ENCODE measurements at regions of chr17 and their contacts with region 1.

Region 1: GRCh38 chr17:45148183-45149036 is at the start of gene HEXIM1:
- DNase-seq: peak; percentile 99
- ATAC-seq: peak; percentile 82
- H3K4me3 Mint-ChIP-seq: peak within 1 kb of the TSS; percentile 98
- H3K27ac Mint-ChIP-seq: peak within 1 kb of the TSS; percentile 100
- H3K4me1 Mint-ChIP-seq: peaks cover 40% of the 10 kb centered on the region
- H3K27me3 Mint-ChIP-seq: no peaks in the 10 kb centered on the region
- CTCF ChIP-seq: no peak
- total RNA-seq, gene HEXIM1: 22.6 to 23.5 TPM

Region 2: GRCh38 chr17:44820631-44821212 is 327.7 kb before region 1 on chr17:
- CTCF ChIA-PET with region 1: no interaction called
- POLR2A ChIA-PET with region 1: no interaction called
- intact Hi-C with region 1: no loop called
- DNase-seq: no peak
- ATAC-seq: no peak
- H3K4me3 Mint-ChIP-seq: no peak overlapping the region
- H3K27ac Mint-ChIP-seq: no peak overlapping the region
- H3K4me1 Mint-ChIP-seq: no peaks in the 10 kb centered on the region
- H3K27me3 Mint-ChIP-seq: peaks cover 6% of the 10 kb centered on the region
- CTCF ChIP-seq: no peak

Region 3: GRCh38 chr17:45060797-45061605 is 87.4 kb before region 1 on chr17 and contains the start of gene NMT1:
- CTCF ChIA-PET with region 1: interaction called, 4 read pairs
- POLR2A ChIA-PET with region 1: interaction called, 11 read pairs
- intact Hi-C with region 1: no loop called
- DNase-seq: peak; percentile 99
- ATAC-seq: peak; percentile 92
- H3K4me3 Mint-ChIP-seq: peak within 1 kb of the TSS; percentile 89
- H3K27ac Mint-ChIP-seq: peak within 1 kb of the TSS; percentile 94
- H3K4me1 Mint-ChIP-seq: peaks cover 37% of the 10 kb centered on the region
- H3K27me3 Mint-ChIP-seq: no peaks in the 10 kb centered on the region
- CTCF ChIP-seq: no peak
- total RNA-seq, gene NMT1: 156 to 169 TPM

Region 4: GRCh38 chr17:45172454-45173286 is 24.3 kb after region 1 on chr17:
- CTCF ChIA-PET with region 1: interaction called, 61 read pairs
- POLR2A ChIA-PET with region 1: interaction called, 44 read pairs
- intact Hi-C with region 1: loop called (anchors 1 kb)
- DNase-seq: peak; percentile 77
- ATAC-seq: peak; percentile 78
- H3K4me3 Mint-ChIP-seq: peak overlapping the region; percentile 68
- H3K27ac Mint-ChIP-seq: peak overlapping the region; percentile 89
- H3K4me1 Mint-ChIP-seq: peaks cover 25% of the 10 kb centered on the region
- H3K27me3 Mint-ChIP-seq: no peaks in the 10 kb centered on the region
- CTCF ChIP-seq: no peak

Region 5: GRCh38 chr17:45228763-45229539 is 80.5 kb after region 1 on chr17:
- CTCF ChIA-PET with region 1: interaction called, 10 read pairs
- POLR2A ChIA-PET with region 1: interaction called, 39 read pairs
- intact Hi-C with region 1: no loop called
- DNase-seq: peak; percentile 96
- ATAC-seq: peak; percentile 41
- H3K4me3 Mint-ChIP-seq: peak overlapping the region; percentile 99
- H3K27ac Mint-ChIP-seq: peak overlapping the region; percentile 99
- H3K4me1 Mint-ChIP-seq: peaks cover 70% of the 10 kb centered on the region
- H3K27me3 Mint-ChIP-seq: no peaks in the 10 kb centered on the region
- CTCF ChIP-seq: no peak

Region 6: GRCh38 chr17:45307290-45308015 is 159.0 kb after region 1 on chr17:
- CTCF ChIA-PET with region 1: interaction called, 3 read pairs
- POLR2A ChIA-PET with region 1: interaction called, 10 read pairs
- intact Hi-C with region 1: no loop called
- DNase-seq: peak; percentile 81
- ATAC-seq: peak; percentile 58
- H3K4me3 Mint-ChIP-seq: peak overlapping the region; percentile 36
- H3K27ac Mint-ChIP-seq: peak overlapping the region; percentile 95
- H3K4me1 Mint-ChIP-seq: peaks cover 83% of the 10 kb centered on the region
- H3K27me3 Mint-ChIP-seq: no peaks in the 10 kb centered on the region
- CTCF ChIP-seq: no peak